Ascending aorta (tissue), 2 donors: ENCODE measurements at regions of chr5 and their contacts with region 1.

Region 1: GRCh38 chr5:151447174-151448037 is at the start of gene SLC36A1:
- DNase-seq: peak; percentile 73 to 97
- H3K4me3 ChIP-seq: peak within 1 kb of the TSS; percentile 63 to 83
- H3K27ac ChIP-seq: peak within 1 kb of the TSS in 1 of 2 donors; percentile 47
- H3K4me1 ChIP-seq: no peaks in the 10 kb centered on the region
- H3K27me3 ChIP-seq: no peaks in the 10 kb centered on the region
- CTCF ChIP-seq: peak; percentile 96 to 97 (median 96)
- total RNA-seq, gene SLC36A1: 19.9 TPM

Region 2: GRCh38 chr5:150656191-150657132 is 790.9 kb before region 1 on chr5:
- intact Hi-C with region 1: no loop called
- DNase-seq: no peak
- H3K4me3 ChIP-seq: peak overlapping the region; percentile 44 to 59
- H3K27ac ChIP-seq: peak overlapping the region; percentile 86 to 90
- H3K4me1 ChIP-seq: peaks cover 19 to 56% of the 10 kb centered on the region in 2 donors
- H3K27me3 ChIP-seq: no peaks in the 10 kb centered on the region
- CTCF ChIP-seq: peak; percentile 39 to 66 (median 58)

Region 3: GRCh38 chr5:151252762-151253604 is 194.4 kb before region 1 on chr5 and contains the start of gene GM2A:
- intact Hi-C with region 1: loop called (anchors 10 kb)
- DNase-seq: peak; percentile 98 to 100
- H3K4me3 ChIP-seq: peak within 1 kb of the TSS; percentile 77 to 88
- H3K27ac ChIP-seq: peak within 1 kb of the TSS; percentile 52 to 75
- H3K4me1 ChIP-seq: peaks cover 5 to 11% of the 10 kb centered on the region in 2 donors
- H3K27me3 ChIP-seq: no peaks in the 10 kb centered on the region
- CTCF ChIP-seq: no peak
- total RNA-seq, gene GM2A: 15.0 TPM

Region 4: GRCh38 chr5:151499501-151500035 is 52.2 kb after region 1 on chr5:
- intact Hi-C with region 1: loop called (anchors 1 kb)
- DNase-seq: no peak
- H3K4me3 ChIP-seq: no peak overlapping the region
- H3K27ac ChIP-seq: no peak overlapping the region
- H3K4me1 ChIP-seq: no peaks in the 10 kb centered on the region
- H3K27me3 ChIP-seq: no peaks in the 10 kb centered on the region
- CTCF ChIP-seq: no peak

Region 5: DNA sequence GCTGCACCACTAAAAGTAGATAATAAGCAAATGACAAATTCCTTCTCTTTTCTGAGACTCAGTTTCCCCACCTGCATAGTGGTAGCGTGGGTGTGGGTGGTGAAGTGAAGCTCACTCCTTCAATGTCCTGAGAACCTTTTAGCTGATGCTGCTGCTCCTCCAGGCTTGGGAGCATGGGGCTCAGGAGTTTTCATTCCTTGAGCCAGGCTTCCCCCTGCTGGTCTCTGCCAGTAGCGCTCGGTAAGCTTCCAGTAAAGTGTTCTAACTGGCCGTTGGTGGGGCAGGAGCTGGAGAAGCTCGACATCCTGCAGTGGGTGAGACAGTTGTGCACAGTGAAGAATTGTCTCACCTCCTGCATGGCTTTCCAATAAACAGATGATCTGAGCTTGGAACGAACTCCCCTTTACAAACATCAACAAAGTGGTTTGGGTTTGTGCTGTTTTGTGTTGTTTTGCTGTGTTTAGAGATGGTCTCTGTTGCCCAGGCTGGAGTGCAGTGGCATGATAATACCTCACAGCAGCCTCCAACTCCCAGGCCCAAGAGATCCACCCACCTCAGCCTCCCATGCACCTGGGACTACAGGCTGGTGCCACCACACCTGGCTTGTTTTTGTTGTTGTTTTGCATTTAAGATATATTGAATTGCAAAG is 204.7 kb after region 1 on chr5:
- intact Hi-C with region 1: loop called (anchors 1 kb)
- DNase-seq: peak in 1 of 2 donors; percentile 85
- H3K4me3 ChIP-seq: no peak overlapping the region
- H3K27ac ChIP-seq: no peak overlapping the region
- H3K4me1 ChIP-seq: no peaks in the 10 kb centered on the region
- H3K27me3 ChIP-seq: no peaks in the 10 kb centered on the region
- CTCF ChIP-seq: peak; percentile 77 to 84 (median 82)

Region 6: GRCh38 chr5:151740336-151740942 is 293.0 kb after region 1 on chr5:
- intact Hi-C with region 1: loop called (anchors 1 kb)
- DNase-seq: peak in 1 of 2 donors; percentile 87
- H3K4me3 ChIP-seq: peak overlapping the region in 1 of 2 donors; percentile 9
- H3K27ac ChIP-seq: peak overlapping the region; percentile 86 to 89
- H3K4me1 ChIP-seq: peaks cover 4 to 33% of the 10 kb centered on the region in 2 donors
- H3K27me3 ChIP-seq: no peaks in the 10 kb centered on the region
- CTCF ChIP-seq: peak; percentile 82 to 94 (median 92)